ENCODE measurements at regions of chr3 and their contacts with region 1.

Region 1: GRCh38 chr3:45167011-45167911 is 21.1 kb upstream of the CDCP1 start:
- DNase-seq: peak; percentile 96 to 97
- H3K4me3 ChIP-seq: peak overlapping the region; percentile 26; the same call in 1 of the 2 replicates
- H3K27ac ChIP-seq: peak overlapping the region; percentile 92
- H3K4me1 ChIP-seq: peaks cover 35% of the 10 kb centered on the region
- H3K27me3 ChIP-seq: no peaks in the 10 kb centered on the region
- CTCF ChIP-seq: no peak

Region 2: DNA sequence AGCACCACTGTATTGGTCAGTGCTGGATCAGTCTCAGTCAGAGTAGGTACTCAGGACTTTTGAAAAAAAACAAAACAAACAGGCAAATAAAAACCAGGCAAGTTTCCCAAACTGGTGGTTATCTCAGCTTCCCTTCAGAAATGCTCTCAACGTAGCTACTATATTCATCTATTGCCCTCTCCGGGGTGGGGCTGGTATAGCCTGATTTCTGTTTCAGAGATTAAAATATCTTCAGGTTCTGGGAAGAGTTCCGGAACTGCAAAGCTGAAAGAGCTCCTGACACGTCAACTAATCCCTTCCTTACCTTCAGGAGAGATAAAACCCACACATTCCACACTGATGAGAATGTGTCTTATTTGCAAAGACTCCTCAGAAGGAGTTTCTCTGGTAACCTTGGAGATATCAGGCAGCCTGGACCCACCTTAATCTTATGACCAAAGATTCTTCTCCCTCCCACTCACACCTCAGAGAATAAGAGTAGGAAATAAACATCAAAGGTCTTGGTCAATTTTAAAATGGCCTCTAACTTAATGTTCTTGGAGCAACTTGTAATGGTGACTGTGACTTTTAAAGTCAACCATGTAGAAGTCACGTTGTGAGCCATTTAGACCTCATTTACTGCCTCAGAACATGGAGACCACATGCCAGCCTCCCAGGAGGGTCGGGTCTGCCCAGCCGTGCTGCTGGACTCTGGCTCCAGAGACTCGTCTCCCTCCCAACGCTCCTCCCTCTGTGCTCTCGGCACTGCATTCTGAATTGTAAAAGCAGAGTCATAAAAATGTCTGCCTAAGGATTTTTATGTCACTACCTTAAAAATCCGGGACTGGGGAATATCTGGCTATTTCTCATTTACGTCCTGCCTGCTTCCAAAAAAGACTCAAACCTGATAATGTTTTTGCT is 74.9 kb before region 1 on chr3:
- CTCF ChIA-PET with region 1: interaction called, 3 read pairs
- POLR2A ChIA-PET with region 1: interaction called, 3 read pairs
- intact Hi-C with region 1: loop called (anchors 1 kb)
- DNase-seq: peak; percentile 80 to 99
- H3K4me3 ChIP-seq: no peak overlapping the region
- H3K27ac ChIP-seq: peak overlapping the region; percentile 95
- H3K4me1 ChIP-seq: peaks cover 43% of the 10 kb centered on the region
- H3K27me3 ChIP-seq: no peaks in the 10 kb centered on the region
- CTCF ChIP-seq: peak; percentile 36; the same call in 1 of the 2 replicates

Region 3: GRCh38 chr3:45123030-45123429 is 44.2 kb before region 1 on chr3:
- CTCF ChIA-PET with region 1: no interaction called
- POLR2A ChIA-PET with region 1: no interaction called
- intact Hi-C with region 1: loop called (anchors 1 kb)
- DNase-seq: peak; percentile 22 to 94
- H3K4me3 ChIP-seq: peak overlapping the region; percentile 14; the same call in 1 of the 2 replicates
- H3K27ac ChIP-seq: peak overlapping the region; percentile 98
- H3K4me1 ChIP-seq: peaks cover 90% of the 10 kb centered on the region
- H3K27me3 ChIP-seq: no peaks in the 10 kb centered on the region
- CTCF ChIP-seq: no peak

Region 4: GRCh38 chr3:45145681-45146614 is 21.3 kb before region 1 on chr3 and contains the start of gene CDCP1:
- CTCF ChIA-PET with region 1: no interaction called
- POLR2A ChIA-PET with region 1: interaction called, 11 read pairs
- intact Hi-C with region 1: no loop called
- DNase-seq: peak; percentile 43 to 78
- H3K4me3 ChIP-seq: peak within 1 kb of the TSS; percentile 83
- H3K27ac ChIP-seq: peak within 1 kb of the TSS; percentile 85
- H3K4me1 ChIP-seq: peaks cover 34% of the 10 kb centered on the region
- H3K27me3 ChIP-seq: no peaks in the 10 kb centered on the region
- CTCF ChIP-seq: no peak
- total RNA-seq, gene CDCP1: 75.7 and 85.0 TPM in 2 replicates

Region 5: DNA sequence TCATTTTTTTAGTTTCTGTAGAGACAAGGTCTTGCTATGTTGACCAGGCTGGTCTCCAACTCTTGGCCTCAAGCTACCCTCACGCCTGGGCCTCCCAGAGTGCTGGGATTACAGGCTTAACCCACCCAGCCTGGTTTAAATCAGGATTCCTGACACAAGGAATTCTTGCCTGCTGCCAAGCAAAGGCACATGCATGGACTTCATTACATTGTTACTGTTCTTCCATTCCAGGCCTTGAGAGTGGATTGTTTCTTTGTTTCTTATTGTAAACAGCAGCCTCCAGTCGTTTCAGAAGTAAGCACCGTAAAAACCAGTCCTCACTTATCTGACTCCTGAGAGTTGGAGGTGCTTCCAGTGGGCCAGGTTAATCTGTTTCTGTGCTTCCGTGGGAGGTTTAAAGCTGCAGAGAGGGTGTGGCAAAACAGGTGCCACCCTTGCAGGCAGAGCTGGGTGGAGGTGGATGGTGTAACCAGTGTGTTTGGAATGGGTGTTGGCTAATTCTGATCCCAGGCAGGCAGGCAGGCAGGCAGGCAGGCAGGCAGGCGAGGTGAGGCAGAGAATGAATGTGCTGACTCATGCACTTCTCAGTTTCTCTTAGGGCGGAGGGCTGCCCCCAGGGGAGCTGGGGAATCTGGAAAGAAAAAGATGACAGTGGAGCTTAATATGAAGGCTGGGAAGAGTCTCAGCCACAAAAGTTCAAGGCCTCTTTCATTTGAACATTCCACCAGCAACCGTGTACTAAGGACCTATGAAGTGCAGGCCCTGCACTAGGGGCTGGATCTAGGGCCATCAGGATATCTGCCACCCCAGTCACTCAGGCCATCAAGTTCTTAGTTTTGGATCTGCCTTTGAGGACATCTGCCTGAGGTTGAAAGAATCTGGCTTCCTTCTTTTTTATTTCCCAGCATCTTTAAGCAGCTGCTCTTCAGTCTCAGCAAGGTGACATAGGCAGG is 15.9 kb after region 1 on chr3:
- CTCF ChIA-PET with region 1: no interaction called
- POLR2A ChIA-PET with region 1: interaction called, 8 read pairs
- intact Hi-C with region 1: loop called (anchors 2 kb)
- DNase-seq: peak; percentile 89 to 94
- H3K4me3 ChIP-seq: peak overlapping the region; percentile 34; the same call in 1 of the 2 replicates
- H3K27ac ChIP-seq: peak overlapping the region; percentile 98
- H3K4me1 ChIP-seq: peaks cover 40% of the 10 kb centered on the region
- H3K27me3 ChIP-seq: no peaks in the 10 kb centered on the region
- CTCF ChIP-seq: no peak

Region 6: GRCh38 chr3:45199837-45200648 is 32.8 kb after region 1 on chr3:
- CTCF ChIA-PET with region 1: no interaction called
- POLR2A ChIA-PET with region 1: no interaction called
- intact Hi-C with region 1: loop called (anchors 1 kb)
- DNase-seq: peak; percentile 72 to 97
- H3K4me3 ChIP-seq: no peak overlapping the region
- H3K27ac ChIP-seq: peak overlapping the region; percentile 92
- H3K4me1 ChIP-seq: peaks cover 32% of the 10 kb centered on the region
- H3K27me3 ChIP-seq: no peaks in the 10 kb centered on the region
- CTCF ChIP-seq: no peak

Region 7: GRCh38 chr3:45224824-45225464 is 57.7 kb after region 1 on chr3:
- CTCF ChIA-PET with region 1: no interaction called
- POLR2A ChIA-PET with region 1: interaction called, 11 read pairs
- intact Hi-C with region 1: no loop called
- DNase-seq: peak in 1 of 2 experiments; percentile 78
- H3K4me3 ChIP-seq: peak overlapping the region; percentile 76
- H3K27ac ChIP-seq: peak overlapping the region; percentile 64; the same call in 1 of the 2 replicates
- H3K4me1 ChIP-seq: peaks cover 30% of the 10 kb centered on the region
- H3K27me3 ChIP-seq: no peaks in the 10 kb centered on the region
- CTCF ChIP-seq: peak; percentile 39

Region 8: GRCh38 chr3:45528429-45528828 is 361.2 kb after region 1 on chr3:
- CTCF ChIA-PET with region 1: no interaction called
- POLR2A ChIA-PET with region 1: no interaction called
- intact Hi-C with region 1: no loop called
- DNase-seq: no peak
- H3K4me3 ChIP-seq: no peak overlapping the region
- H3K27ac ChIP-seq: no peak overlapping the region
- H3K4me1 ChIP-seq: no peaks in the 10 kb centered on the region
- H3K27me3 ChIP-seq: no peaks in the 10 kb centered on the region
- CTCF ChIP-seq: no peak